ENCODE measurements at regions of chr5 and their contacts with region 1.

Region 1: DNA sequence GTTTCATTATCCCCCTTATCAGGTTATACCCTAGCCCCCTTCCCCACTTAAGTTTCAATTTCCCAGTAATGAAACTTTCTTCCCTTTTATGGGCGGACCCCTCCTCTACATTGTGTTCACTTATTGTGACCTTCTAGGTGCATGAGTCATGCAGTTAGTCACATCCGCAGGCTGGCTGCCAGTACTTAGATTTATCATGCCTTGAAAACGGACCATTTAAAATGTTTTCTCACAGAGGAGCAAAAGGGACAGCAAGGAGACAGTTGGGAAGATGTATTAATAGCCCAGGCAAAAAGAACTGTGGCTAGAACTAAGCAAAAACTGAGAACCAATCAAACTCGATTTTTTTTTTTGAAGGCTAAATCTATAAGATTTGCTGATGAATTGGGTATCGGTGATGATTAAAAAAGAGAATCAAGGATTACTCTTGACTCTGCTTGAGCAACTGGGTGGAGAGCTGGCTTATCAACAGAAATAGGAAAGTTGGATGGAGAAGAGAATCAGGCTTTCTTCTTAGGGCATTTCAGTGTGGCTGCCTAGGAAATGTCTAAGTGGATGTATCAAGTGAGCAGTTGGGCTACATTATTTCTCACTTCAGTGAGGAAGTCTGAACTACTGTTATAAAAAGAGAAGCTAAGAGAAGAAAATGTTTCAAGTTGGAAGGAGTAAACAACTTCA is 615.0 kb downstream of the HINT1 start:
- DNase-seq: peak; percentile 85
- H3K4me3 ChIP-seq: peak overlapping the region in 1 of 3 experiments; percentile 27
- H3K27ac ChIP-seq: peak overlapping the region; percentile 72
- H3K4me1 ChIP-seq: peaks cover 40% of the 10 kb centered on the region
- H3K27me3 ChIP-seq: no peaks in the 10 kb centered on the region
- CTCF ChIP-seq: no peak

Region 2: DNA sequence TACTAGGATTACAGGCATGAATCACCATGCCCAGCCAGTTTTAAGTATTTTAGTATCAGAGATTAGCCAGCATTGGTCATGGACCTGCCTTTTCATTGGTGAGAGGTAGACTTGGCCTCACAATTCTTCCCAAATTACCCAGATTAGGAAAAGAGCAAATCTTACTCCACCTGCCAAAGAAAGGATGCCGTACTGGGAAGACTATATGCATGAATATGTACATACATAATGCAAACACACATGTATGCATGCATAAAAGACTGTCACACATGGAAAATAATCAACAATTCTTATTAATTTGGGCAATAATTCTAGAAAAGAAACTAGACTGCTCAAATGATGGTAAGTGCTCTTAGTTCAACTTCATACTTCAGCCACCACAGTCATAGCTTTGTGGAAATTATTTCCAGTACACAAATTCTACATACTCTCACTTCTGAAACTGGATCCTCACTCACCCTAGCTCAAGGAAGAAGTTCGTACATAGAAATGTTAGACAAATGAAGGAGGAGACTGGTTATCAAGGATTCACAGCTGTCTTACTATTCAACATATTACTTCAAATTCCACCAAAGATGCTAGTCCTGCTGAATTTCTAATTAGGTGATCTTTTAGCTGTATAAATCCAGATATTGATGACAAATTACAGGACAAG is 728.4 kb before region 1 on chr5:
- CTCF ChIA-PET with region 1: no interaction called
- dilution Hi-C with region 1: no loop called
- in situ Hi-C with region 1: no loop called
- intact Hi-C with region 1: no loop called
- DNase-seq: no peak
- H3K4me3 ChIP-seq: no peak overlapping the region
- H3K27ac ChIP-seq: no peak overlapping the region
- H3K4me1 ChIP-seq: no peaks in the 10 kb centered on the region
- H3K27me3 ChIP-seq: no peaks in the 10 kb centered on the region
- CTCF ChIP-seq: no peak

Region 3: GRCh38 chr5:130520211-130520610 is 29.8 kb before region 1 on chr5:
- CTCF ChIA-PET with region 1: interaction called, 20 read pairs
- dilution Hi-C with region 1: no loop called
- in situ Hi-C with region 1: no loop called
- intact Hi-C with region 1: no loop called
- DNase-seq: peak; percentile 88
- H3K4me3 ChIP-seq: no peak overlapping the region
- H3K27ac ChIP-seq: peak overlapping the region; percentile 97
- H3K4me1 ChIP-seq: peaks cover 12% of the 10 kb centered on the region
- H3K27me3 ChIP-seq: no peaks in the 10 kb centered on the region
- CTCF ChIP-seq: no peak

Region 4: DNA sequence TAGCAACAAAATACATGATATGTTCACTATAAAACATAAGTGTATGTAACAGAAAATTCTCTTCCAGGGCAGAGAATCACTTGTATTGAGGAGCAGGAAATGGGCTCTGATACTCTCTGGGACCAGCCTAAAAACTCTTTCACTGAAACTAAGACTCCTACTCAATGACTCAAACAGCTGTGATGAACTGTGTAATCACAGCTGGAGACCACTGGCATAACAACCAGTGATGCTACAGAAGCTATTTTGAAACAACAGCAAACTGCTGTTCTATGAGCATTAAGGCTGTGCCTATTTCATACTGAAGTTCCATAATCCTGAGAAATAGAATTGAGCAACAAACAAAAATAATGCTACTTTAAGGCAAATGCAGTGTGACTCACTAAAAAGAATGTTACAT is 21.1 kb after region 1 on chr5:
- CTCF ChIA-PET with region 1: no interaction called
- dilution Hi-C with region 1: no loop called
- in situ Hi-C with region 1: no loop called
- intact Hi-C with region 1: no loop called
- DNase-seq: peak; percentile 76
- H3K4me3 ChIP-seq: no peak overlapping the region
- H3K27ac ChIP-seq: no peak overlapping the region
- H3K4me1 ChIP-seq: no peaks in the 10 kb centered on the region
- H3K27me3 ChIP-seq: no peaks in the 10 kb centered on the region
- CTCF ChIP-seq: no peak

Region 5: GRCh38 chr5:130773811-130774210 is 223.8 kb after region 1 on chr5:
- CTCF ChIA-PET with region 1: no interaction called
- dilution Hi-C with region 1: no loop called
- in situ Hi-C with region 1: no loop called
- intact Hi-C with region 1: loop called (anchors 5 kb)
- DNase-seq: peak; percentile 81
- H3K4me3 ChIP-seq: no peak overlapping the region
- H3K27ac ChIP-seq: no peak overlapping the region
- H3K4me1 ChIP-seq: peaks cover 8% of the 10 kb centered on the region
- H3K27me3 ChIP-seq: no peaks in the 10 kb centered on the region
- CTCF ChIP-seq: peak in 1 of 2 donors; percentile 44

Region 6: DNA sequence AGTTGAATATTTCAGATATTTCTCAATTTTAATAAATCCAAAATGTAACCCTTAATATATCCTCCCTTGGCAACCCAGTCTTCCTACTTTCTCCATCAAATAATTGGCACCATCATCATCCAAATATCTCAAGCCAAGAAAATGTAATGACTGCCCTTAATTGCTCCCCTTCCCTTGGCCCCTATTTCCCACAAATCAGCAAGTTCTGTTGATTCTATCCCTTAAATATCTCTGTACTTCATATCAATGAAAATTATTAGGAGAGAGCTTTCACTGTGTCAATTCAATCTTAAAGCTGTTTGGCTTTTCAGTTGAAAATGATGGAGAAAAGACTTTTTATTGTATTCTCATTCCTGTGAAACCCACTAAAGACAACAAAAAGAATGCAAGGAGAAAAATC is 265.2 kb after region 1 on chr5:
- CTCF ChIA-PET with region 1: no interaction called
- dilution Hi-C with region 1: no loop called
- in situ Hi-C with region 1: no loop called
- intact Hi-C with region 1: no loop called
- DNase-seq: no peak
- H3K4me3 ChIP-seq: no peak overlapping the region
- H3K27ac ChIP-seq: no peak overlapping the region
- H3K4me1 ChIP-seq: no peaks in the 10 kb centered on the region
- H3K27me3 ChIP-seq: no peaks in the 10 kb centered on the region
- CTCF ChIP-seq: no peak